Sciatic nerve (tissue), 2 donors: ENCODE measurements at regions of chr1 and their contacts with region 1.

Region 1: GRCh38 chr1:112390775-112391602 is 5.0 kb upstream of the CTTNBP2NL start:
- DNase-seq: peak; percentile 94
- ATAC-seq: peak; percentile 89

Region 2: DNA sequence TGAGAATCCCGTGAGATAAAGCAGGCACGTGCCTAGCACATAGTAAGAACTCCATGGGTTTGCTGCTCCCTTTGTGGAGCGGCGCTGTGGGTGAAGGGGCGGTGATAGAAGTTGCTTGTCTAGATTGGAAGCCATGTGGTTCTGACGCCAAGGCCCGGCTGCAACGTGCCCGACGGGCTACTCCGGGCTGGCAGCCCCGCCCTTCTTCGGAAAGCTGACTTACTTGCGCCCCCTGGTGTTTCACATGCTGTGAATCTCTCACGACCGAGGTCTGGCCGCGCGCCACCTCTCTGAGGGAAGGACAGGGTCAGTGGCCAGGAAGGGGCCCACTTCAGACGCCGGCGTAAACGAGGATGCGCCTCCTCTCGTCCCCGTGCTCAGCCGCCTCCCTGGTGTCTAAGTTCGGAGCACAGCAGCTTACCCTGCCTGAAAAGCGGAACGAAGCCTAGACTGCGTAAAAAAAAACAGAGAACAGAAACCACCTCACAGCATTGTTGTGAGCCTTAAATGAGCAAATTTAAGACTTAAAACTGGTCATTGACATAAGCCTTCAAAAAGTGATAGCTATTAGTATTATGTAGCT is 75.2 kb after region 1 on chr1:
- intact Hi-C with region 1: loop called (anchors 5 kb)
- DNase-seq: peak; percentile 98
- ATAC-seq: peak; percentile 96

Region 3: DNA sequence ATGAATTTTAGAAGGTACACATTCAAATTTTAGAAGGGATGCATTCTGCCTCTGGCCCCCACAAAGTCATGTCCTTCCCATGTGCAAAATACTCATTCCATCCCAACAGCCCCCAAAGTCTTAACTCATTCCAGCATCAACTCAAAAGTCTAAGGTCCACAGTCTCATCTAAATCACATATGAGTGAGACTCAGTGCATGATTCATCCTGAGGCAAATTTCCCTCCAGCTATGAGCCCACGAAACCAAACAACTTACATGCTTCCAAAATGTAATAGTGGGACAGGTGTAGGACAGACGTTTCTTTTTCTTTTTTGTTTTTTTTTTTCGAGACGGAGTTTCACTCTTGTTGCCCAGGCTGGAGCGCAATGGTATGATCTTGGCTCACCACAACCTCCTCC is 105.3 kb after region 1 on chr1:
- intact Hi-C with region 1: loop called (anchors 10 kb)
- DNase-seq: no peak
- ATAC-seq: no peak

Region 4: GRCh38 chr1:112706908-112707663 is 316.1 kb after region 1 on chr1 and contains the start of gene RHOC:
- intact Hi-C with region 1: loop called (anchors 10 kb)
- DNase-seq: peak; percentile 92
- ATAC-seq: peak; percentile 74
- total RNA-seq, gene RHOC: 241 TPM